PC-9 (cell line): ENCODE measurements at regions of chr1 and their contacts with region 1.

Region 1: GRCh38 chr1:52842643-52843309 is at the start of gene ZYG11A:
- DNase-seq: peak; percentile 75 to 93
- H3K4me3 ChIP-seq: peak within 1 kb of the TSS; percentile 95
- H3K27ac ChIP-seq: peak within 1 kb of the TSS; percentile 59
- H3K4me1 ChIP-seq: peaks cover 19% of the 10 kb centered on the region
- H3K27me3 ChIP-seq: no peaks in the 10 kb centered on the region
- CTCF ChIP-seq: peak; percentile 41; the same call in 1 of the 2 replicates
- total RNA-seq, gene ZYG11A: 9.7 and 11.5 TPM in 2 replicates

Region 2: DNA sequence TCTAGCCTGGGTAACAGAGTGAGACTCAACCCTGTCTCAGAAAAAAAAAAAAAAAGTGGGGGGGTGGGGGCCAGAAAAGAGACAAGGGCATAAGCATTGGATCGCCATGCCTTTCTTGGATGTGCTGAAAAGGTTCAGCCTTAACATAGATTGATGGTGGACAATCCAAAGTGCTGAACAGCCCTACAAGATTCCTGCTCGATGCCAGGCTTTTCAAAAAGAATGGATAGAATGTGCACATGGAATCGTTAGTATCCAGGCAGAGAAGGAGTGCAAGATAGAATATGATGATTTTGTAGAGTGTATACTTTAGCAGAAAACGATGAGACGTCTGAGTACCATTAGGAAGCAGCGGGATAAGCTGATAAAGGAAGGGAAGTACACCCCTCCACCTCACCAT is 133.8 kb before region 1 on chr1:
- CTCF ChIA-PET with region 1: no interaction called
- POLR2A ChIA-PET with region 1: no interaction called
- intact Hi-C with region 1: no loop called
- DNase-seq: no peak
- H3K4me3 ChIP-seq: no peak overlapping the region
- H3K27ac ChIP-seq: no peak overlapping the region
- H3K4me1 ChIP-seq: peaks cover 29% of the 10 kb centered on the region
- H3K27me3 ChIP-seq: no peaks in the 10 kb centered on the region
- CTCF ChIP-seq: no peak

Region 3: GRCh38 chr1:52856026-52856425 is 13.2 kb after region 1 on chr1:
- CTCF ChIA-PET with region 1: no interaction called
- POLR2A ChIA-PET with region 1: no interaction called
- intact Hi-C with region 1: loop called (anchors 2 kb)
- DNase-seq: peak; percentile 37 to 93
- H3K4me3 ChIP-seq: no peak overlapping the region
- H3K27ac ChIP-seq: peak overlapping the region; percentile 69
- H3K4me1 ChIP-seq: peaks cover 44% of the 10 kb centered on the region
- H3K27me3 ChIP-seq: no peaks in the 10 kb centered on the region
- CTCF ChIP-seq: no peak